Left cardiac atrium (tissue), 4 donors: ENCODE measurements at regions of chr2 and their contacts with region 1.

Region 1: DNA sequence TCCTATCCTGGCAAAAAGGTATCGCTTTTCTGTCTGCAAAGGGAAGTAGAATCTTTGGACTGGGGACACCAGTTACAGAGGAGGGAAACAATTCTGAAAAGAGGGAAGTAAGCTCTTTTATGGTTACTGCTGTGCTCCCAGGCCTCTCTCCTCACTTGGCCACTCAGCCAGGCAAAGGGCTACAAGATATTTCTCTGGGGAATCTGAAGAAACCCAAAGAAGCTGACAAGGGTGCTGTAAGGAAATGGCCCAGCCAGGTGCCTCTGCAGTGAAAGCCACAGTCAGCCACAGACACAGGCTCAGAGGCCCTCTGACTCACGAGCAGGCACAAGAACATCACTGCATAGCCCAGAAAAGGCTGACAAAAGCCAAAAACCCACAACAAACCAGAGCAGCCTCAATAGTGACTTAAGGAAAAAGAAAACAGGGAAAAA is 5.8 kb downstream of the HDLBP start:
- DNase-seq: no peak
- ATAC-seq: peak in 1 of 2 donors; percentile 7

Region 2: DNA sequence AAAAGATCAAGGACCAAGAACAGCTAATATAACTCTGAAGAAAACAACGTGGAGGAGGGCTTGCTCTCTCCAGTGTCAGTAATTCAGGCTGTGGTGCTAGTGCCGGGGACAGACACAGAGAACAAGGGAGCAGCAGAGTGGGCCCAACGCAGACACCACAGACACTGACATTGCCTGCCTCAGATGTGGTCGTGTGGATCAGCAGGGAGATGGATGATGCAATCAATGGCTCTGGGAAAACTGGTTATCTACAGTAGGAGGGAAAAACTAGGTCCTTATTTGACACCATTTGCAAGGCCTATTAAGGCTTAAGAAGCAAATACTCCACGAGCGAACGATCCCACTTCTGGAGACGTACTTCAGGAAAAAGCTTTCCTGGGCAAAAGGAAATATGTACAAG is 30.3 kb before region 1 on chr2:
- intact Hi-C with region 1: loop called in 1 of 2 experiments (anchors 5 kb)
- DNase-seq: no peak
- ATAC-seq: no peak

Region 3: DNA sequence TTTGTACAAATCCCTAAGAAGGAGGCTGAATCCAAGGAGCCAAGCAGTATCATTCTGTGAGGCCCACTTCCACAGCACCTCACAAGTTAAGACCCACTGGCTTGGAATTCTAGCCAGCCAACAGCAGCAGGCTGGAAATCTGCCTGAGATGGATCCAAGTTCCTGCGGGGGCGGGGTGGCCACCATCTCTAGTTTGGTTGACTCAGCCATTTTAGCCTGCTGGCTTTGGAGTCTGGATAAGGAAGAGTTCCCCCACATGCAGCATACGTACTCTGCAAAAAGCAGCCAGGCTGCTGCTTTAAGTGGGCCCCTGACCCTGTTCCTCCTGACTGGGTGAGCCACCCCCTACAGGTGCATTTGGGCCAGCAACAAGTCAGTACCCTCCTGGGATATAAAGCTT is 111.6 kb after region 1 on chr2:
- intact Hi-C with region 1: no loop called
- DNase-seq: no peak
- ATAC-seq: no peak